CD14-positive monocyte (primary cell): ENCODE measurements at regions of chr7 and their contacts with region 1.

Region 1: DNA sequence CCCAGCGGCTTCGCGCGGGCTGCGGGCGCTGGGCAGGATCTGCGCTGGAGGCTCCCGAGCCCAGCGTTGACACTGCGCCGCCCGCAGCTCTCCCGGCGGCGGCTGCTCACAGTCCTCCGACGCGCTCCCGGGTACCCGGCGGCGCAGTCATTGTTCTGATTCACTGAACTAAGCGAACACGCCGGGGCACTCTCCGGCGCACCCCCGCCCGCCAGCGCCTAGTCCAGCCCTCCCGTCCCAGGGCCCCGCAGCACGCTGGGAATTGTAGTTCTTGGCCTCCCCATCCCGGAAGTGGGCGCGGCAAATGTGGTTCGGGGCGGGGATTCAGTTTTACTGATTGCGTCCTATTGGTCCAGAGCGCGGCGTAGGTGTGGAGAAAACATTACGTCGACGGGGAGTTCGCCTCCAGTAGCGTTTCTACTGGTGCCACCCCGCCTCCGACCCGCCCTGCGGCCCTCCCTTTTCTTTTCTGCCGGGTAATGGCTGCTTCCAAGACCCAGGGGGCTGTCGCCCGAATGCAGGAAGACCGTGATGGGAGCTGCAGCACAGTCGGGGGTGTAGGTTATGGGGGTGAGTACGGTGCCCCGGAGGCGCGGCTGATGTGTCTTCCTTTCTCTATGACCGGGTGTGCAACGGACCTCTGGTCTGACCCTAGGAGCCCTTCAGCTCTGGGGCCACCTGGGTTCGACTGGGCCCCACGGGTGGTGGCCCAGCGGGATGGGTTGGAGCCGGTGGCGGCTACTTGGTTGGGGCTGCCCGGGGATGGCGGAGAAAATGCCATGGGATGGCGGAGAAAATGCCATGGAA is at the starts of genes DOCK4 and ZNF277:
- DNase-seq: peak; percentile 98
- H3K4me3 ChIP-seq: peak within 1 kb of the TSS; percentile 81 to 98 (median 94)
- H3K4me3 Mint-ChIP-seq: peak within 1 kb of the TSS; percentile 98 to 100
- H3K27ac ChIP-seq: peak within 1 kb of the TSS; percentile 34 to 88
- H3K27ac Mint-ChIP-seq: peak within 1 kb of the TSS; percentile 88 to 97 (median 93)
- H3K4me1 ChIP-seq: peaks cover 23 to 28% of the 10 kb centered on the region in 2 donors
- H3K4me1 Mint-ChIP-seq: peaks cover 39% of the 10 kb centered on the region
- H3K27me3 ChIP-seq: peaks cover 22 to 29% of the 10 kb centered on the region in 2 donors
- H3K27me3 Mint-ChIP-seq: peaks cover 18 to 28% (median 19%) of the 10 kb centered on the region in 3 donors
- CTCF ChIP-seq: no peak
- polyA plus RNA-seq, gene DOCK4: 1.3 to 5.0 (median 2.7) TPM
- polyA plus RNA-seq, gene ZNF277: 17.5 to 20.7 (median 20.0) TPM

Region 2: DNA sequence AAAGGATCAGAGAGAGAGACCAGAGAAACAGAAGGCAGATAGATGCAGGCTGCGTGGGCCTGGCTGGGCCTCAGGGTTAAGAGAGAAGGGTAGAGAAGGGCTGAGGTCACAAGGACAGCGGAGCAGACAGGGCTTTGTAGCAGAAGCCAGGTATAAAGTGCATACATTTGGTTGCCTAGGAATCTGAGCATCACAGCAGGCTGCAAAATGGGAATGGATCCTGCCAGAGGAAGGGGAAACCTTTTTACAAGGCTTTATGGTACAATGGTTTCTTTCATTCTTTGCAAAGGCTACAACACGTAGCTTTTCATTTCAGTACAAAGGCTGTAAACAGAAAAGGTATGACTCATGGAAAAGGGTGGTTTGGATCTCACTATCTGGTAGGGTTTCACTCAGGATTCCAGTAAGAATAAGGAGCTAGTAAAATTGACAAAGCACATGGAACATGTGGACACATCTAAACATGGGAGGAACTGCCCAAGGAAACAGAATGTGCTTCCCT is 275.4 kb before region 1 on chr7:
- intact Hi-C with region 1: no loop called
- DNase-seq: no peak
- H3K4me3 ChIP-seq: no peak overlapping the region
- H3K4me3 Mint-ChIP-seq: no peak overlapping the region
- H3K27ac ChIP-seq: no peak overlapping the region
- H3K27ac Mint-ChIP-seq: no peak overlapping the region
- H3K4me1 ChIP-seq: no peaks in the 10 kb centered on the region
- H3K4me1 Mint-ChIP-seq: no peaks in the 10 kb centered on the region
- H3K27me3 ChIP-seq: no peaks in the 10 kb centered on the region
- H3K27me3 Mint-ChIP-seq: peaks cover 0 to 2% (median 1%) of the 10 kb centered on the region in 3 donors
- CTCF ChIP-seq: no peak

Region 3: GRCh38 chr7:111987115-111987826 is 219.2 kb before region 1 on chr7:
- intact Hi-C with region 1: loop called (anchors 5 to 10 kb)
- DNase-seq: peak; percentile 76 to 92 (median 88)
- H3K4me3 ChIP-seq: peak overlapping the region in 2 of 3 experiments; percentile 37 to 62
- H3K4me3 Mint-ChIP-seq: peak overlapping the region; percentile 53 to 71
- H3K27ac ChIP-seq: peak overlapping the region; percentile 59 to 94
- H3K27ac Mint-ChIP-seq: peak overlapping the region; percentile 97 to 99 (median 98)
- H3K4me1 ChIP-seq: peaks cover 24 to 28% of the 10 kb centered on the region in 2 donors
- H3K4me1 Mint-ChIP-seq: peaks cover 30% of the 10 kb centered on the region
- H3K27me3 ChIP-seq: no peaks in the 10 kb centered on the region
- H3K27me3 Mint-ChIP-seq: peaks cover 0 to 8% (median 5%) of the 10 kb centered on the region in 3 donors
- CTCF ChIP-seq: no peak

Region 4: DNA sequence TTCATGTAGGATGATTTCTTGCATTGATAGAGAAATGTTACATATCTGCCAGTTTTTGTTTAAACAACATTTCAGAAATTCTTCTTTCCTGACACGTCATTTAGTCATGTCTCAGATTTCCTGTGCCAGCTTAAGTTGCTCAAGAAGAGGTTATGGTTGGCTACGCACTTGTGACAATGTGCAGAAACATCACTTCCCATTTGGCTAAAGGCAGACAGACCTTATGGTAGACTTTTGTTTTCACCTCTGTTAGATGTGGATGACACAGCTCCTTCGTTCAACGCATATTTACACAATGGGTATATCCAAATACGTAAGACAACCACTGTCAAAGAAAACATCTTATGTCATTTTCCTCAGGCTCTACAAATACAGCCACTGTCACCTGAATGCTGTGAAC is 126.0 kb before region 1 on chr7:
- intact Hi-C with region 1: loop called in 1 of 2 experiments (anchors 5 kb)
- DNase-seq: peak; percentile 96 to 99 (median 99)
- H3K4me3 ChIP-seq: peak overlapping the region; percentile 16 to 33 (median 32)
- H3K4me3 Mint-ChIP-seq: peak overlapping the region; percentile 60 to 85
- H3K27ac ChIP-seq: peak overlapping the region; percentile 92 to 99
- H3K27ac Mint-ChIP-seq: peak overlapping the region; percentile 99 to 100 (median 100)
- H3K4me1 ChIP-seq: peaks cover 41 to 52% of the 10 kb centered on the region in 2 donors
- H3K4me1 Mint-ChIP-seq: peaks cover 42% of the 10 kb centered on the region
- H3K27me3 ChIP-seq: no peaks in the 10 kb centered on the region
- H3K27me3 Mint-ChIP-seq: peaks cover 0 to 4% (median 0%) of the 10 kb centered on the region in 3 donors
- CTCF ChIP-seq: no peak

Region 5: DNA sequence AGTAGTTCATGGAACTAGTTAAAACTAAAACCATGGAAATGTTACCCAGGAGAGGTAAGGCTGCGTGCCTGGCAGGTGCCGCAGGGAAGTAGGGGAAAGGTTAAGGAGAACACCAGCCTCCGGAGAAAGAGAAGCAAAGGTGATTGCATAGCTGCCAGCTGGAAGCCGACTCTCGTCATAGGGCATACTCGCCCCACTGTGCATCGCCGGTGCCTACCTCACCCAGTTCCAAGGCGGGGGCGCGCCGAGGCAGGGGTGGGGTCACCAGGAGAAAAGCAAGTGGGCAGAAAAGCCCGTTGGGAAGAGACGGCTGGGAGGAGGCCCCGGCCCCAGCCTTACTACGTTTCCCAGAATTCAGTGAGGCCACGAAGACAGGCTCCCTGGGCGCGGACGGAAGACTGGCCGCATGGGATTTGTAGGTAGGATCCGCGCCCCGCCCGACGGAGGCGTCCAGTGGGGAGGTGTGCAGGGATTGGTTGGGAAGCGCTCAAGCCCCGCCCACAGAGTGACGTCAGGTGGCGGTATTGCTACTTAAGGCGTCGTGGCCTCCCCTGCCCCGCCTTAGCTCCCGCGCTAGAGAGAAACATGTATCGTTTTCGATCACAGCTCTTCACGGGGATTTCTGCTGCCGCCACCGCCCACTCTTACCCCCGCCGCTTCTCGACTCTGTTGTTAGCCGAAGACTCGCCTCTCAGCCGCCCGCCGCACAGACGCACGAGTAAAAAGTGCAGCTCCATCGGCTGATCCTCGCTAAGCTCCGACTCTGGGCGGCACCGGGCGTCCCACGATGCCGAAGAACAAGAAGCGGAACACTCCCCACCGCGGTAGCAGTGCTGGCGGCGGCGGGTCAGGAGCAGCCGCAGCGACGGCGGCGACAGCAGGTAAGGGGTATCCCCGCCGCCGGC is 243.7 kb after region 1 on chr7 and contains the start of gene IFRD1:
- intact Hi-C with region 1: loop called (anchors 5 to 10 kb)
- DNase-seq: peak; percentile 96 to 98 (median 97)
- H3K4me3 ChIP-seq: peak within 1 kb of the TSS; percentile 75 to 100 (median 100)
- H3K4me3 Mint-ChIP-seq: peak within 1 kb of the TSS; percentile 96 to 98
- H3K27ac ChIP-seq: peak within 1 kb of the TSS; percentile 97
- H3K27ac Mint-ChIP-seq: peak within 1 kb of the TSS; percentile 97 to 99 (median 98)
- H3K4me1 ChIP-seq: peaks cover 23 to 40% of the 10 kb centered on the region in 2 donors
- H3K4me1 Mint-ChIP-seq: peaks cover 41% of the 10 kb centered on the region
- H3K27me3 ChIP-seq: no peaks in the 10 kb centered on the region
- H3K27me3 Mint-ChIP-seq: peaks cover 0 to 8% (median 0%) of the 10 kb centered on the region in 3 donors
- CTCF ChIP-seq: no peak
- polyA plus RNA-seq, gene IFRD1: 13.6 to 81.6 (median 18.7) TPM